MCF 10A (cell line): ENCODE measurements at regions of chr11 and their contacts with region 1.

Region 1: DNA sequence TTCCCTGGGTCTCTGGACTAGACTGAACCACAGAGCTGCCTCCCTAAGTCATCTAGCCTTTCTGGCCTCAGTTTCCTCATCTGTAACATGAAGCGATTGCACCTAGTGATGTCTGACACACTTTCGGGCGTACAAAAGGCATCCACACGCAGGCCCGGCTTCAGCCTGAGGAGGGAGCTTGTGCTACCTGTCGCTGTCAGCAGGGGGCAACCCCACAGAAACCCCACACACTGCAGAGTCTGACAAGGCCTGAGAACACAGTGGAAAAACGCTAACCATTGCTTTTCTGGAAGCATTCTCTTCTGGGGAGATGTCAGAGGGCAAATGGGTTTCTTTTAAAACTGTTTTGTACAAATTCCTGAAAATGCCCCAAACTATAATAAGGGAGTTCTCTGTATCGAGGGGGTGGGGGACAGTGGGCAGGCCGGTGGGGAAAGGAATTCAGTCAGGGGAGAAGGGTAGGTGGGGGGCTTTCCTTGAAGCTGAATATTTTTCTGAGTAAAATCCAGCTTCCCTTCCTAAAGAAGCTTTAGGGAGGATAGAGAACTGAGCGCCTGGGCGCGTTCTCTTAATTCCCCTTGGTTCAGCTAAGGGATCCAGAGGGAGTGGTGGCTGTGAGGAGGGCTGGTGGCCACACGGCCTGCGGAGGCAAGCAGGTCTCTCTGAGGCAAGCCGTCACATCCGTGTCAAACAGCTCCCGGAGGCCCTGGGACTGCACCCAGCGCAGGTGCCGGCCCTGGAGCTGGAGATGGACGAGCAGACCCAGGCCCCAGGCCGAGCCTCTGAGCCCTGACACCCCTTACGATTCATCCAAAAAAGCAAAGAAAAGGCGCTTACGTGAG is 533 bp downstream of the ELF5 start:
- DNase-seq: peak; percentile 66
- H3K4me3 Mint-ChIP-seq: no peak overlapping the region
- H3K27ac Mint-ChIP-seq: no peak overlapping the region
- H3K4me1 Mint-ChIP-seq: no peaks in the 10 kb centered on the region
- H3K27me3 Mint-ChIP-seq: peaks cover 5% of the 10 kb centered on the region
- CTCF ChIP-seq: peak; percentile 63

Region 2: GRCh38 chr11:34523068-34523467 is 10.0 kb after region 1 on chr11:
- CTCF ChIA-PET with region 1: interaction called, 12 read pairs
- POLR2A ChIA-PET with region 1: interaction called, 4 read pairs
- intact Hi-C with region 1: no loop called
- DNase-seq: no peak
- H3K4me3 Mint-ChIP-seq: no peak overlapping the region
- H3K27ac Mint-ChIP-seq: no peak overlapping the region
- H3K4me1 Mint-ChIP-seq: peaks cover 6% of the 10 kb centered on the region
- H3K27me3 Mint-ChIP-seq: peaks cover 6% of the 10 kb centered on the region
- CTCF ChIP-seq: no peak

Region 3: GRCh38 chr11:34570584-34570983 is 57.5 kb after region 1 on chr11:
- CTCF ChIA-PET with region 1: interaction called, 3 read pairs
- POLR2A ChIA-PET with region 1: no interaction called
- intact Hi-C with region 1: loop called (anchors 5 kb)
- DNase-seq: peak; percentile 87
- H3K4me3 Mint-ChIP-seq: no peak overlapping the region
- H3K27ac Mint-ChIP-seq: no peak overlapping the region
- H3K4me1 Mint-ChIP-seq: peaks cover 14% of the 10 kb centered on the region
- H3K27me3 Mint-ChIP-seq: peaks cover 3% of the 10 kb centered on the region
- CTCF ChIP-seq: no peak

Region 4: DNA sequence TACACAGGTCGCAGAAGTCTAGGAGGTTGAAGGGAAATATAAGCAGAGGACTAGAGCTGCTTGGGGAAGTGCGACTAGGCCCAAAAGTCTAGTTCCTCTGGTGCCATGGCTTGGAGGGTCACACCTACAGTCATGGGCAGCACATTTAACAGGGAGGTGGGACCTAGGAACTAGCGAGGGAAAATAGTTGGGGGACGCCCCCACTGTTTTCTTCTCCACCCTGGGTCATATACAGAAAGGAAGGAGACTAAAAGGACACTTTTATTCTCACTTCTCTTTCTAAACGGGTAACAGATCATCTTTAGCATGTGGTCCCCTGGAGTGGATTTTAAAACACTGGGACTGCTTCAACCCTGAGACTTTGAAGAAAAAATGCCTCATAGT is 386.6 kb after region 1 on chr11:
- CTCF ChIA-PET with region 1: interaction called, 25 read pairs
- POLR2A ChIA-PET with region 1: no interaction called
- intact Hi-C with region 1: no loop called
- DNase-seq: peak; percentile 14
- H3K4me3 Mint-ChIP-seq: no peak overlapping the region
- H3K27ac Mint-ChIP-seq: no peak overlapping the region
- H3K4me1 Mint-ChIP-seq: peaks cover 4% of the 10 kb centered on the region
- H3K27me3 Mint-ChIP-seq: no peaks in the 10 kb centered on the region
- CTCF ChIP-seq: no peak